ENCODE measurements at regions of chr2 and their contacts with region 1.

Region 1: DNA sequence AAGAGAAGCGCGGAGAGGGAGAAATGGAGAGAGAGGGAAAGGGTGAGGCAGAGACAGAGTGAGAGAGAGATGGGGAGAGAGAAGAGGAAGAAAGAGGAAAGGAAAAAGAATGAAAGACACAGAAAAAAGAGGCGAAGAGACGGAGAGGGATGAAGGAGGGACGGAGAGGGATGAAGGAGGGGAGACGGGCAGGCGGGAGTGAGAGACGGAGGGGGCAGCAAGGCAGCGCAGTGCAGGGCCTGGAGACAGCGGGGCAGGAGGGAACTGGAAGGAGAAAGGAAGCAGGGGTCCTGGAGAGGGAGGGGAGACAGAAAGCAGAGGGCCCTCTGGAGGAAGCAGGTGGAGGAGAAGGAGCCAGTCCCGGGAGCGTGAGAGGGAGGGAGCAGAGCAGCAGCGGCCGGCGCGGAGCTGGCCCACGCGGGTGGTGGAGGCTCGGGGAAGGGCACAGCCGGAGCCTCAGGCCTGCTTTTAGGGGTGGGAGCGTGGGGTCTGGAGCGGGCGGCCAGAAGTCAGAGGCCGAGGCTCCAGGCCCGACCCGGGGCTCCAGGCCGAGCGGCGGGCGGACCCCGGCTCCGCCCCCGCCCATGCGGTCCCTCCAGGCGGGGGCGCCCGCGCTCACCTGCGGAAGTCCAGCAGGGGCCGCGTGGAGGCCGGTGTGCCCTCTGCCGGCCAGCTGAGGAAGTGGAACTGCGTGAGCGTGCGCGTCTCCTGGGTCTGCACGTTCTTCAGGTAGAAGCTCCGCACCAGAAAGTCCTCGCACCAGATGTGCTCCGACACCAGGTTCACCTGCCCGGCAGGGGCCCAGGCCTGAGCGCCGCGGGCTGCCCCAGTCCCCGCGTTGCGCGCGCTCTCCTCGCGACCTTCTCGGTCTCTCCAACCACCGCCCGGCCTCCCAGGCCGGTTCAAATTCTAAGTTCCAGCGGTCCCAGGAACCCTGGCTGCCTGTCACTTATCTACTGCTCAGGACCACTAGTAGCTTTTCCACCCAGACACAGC is 14.5 kb downstream of the PTPRN start:
- DNase-seq: peak; percentile 93
- ATAC-seq: peak; percentile 90
- H3K4me3 Mint-ChIP-seq: peak overlapping the region; percentile 68
- H3K27ac Mint-ChIP-seq: peak overlapping the region; percentile 84
- H3K4me1 Mint-ChIP-seq: peaks cover 22% of the 10 kb centered on the region
- H3K27me3 Mint-ChIP-seq: no peaks in the 10 kb centered on the region

Region 2: DNA sequence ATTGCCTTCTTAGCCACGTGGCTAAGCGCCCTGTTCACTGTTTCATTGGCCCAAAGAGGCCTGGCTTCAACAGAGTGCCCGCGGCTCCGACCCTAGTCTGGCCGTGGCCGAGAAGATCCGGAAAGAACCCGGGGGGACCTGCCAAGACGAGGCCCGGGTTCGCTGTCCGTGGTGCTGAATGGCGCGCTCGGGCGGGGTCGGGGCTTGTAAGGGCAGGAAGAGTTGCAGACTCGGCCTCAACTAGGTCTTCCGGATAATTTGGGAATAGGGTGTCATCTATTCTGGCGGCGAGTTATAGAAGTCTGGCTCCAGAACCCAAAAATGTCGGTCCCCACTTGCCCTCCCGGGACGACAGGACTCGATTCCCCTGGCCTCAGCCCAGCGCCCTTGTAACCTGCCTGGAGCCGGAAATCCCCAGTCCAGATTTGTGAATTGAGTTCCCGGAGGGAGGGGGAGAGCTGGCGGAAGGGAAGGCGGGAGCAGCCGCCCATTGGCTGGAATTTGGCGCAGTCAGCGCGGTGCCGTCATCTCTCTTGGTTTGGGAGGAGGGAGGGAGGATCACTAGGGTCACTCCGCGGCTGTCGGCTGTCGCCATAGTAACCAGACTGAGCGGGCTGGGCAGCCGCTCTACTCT is 331.7 kb before region 1 on chr2:
- CTCF ChIA-PET with region 1: no interaction called
- POLR2A ChIA-PET with region 1: no interaction called
- intact Hi-C with region 1: no loop called
- DNase-seq: peak; percentile 81
- ATAC-seq: no peak
- H3K4me3 Mint-ChIP-seq: no peak overlapping the region
- H3K27ac Mint-ChIP-seq: no peak overlapping the region
- H3K4me1 Mint-ChIP-seq: peaks cover 11% of the 10 kb centered on the region
- H3K27me3 Mint-ChIP-seq: peaks cover 62% of the 10 kb centered on the region

Region 3: GRCh38 chr2:219057709-219058540 is 236.7 kb before region 1 on chr2:
- CTCF ChIA-PET with region 1: interaction called, 8 read pairs
- POLR2A ChIA-PET with region 1: no interaction called
- intact Hi-C with region 1: loop called (anchors 1 to 5 kb)
- DNase-seq: peak; percentile 90
- ATAC-seq: peak; percentile 97
- H3K4me3 Mint-ChIP-seq: no peak overlapping the region
- H3K27ac Mint-ChIP-seq: no peak overlapping the region
- H3K4me1 Mint-ChIP-seq: peaks cover 19% of the 10 kb centered on the region
- H3K27me3 Mint-ChIP-seq: peaks cover 56% of the 10 kb centered on the region

Region 4: DNA sequence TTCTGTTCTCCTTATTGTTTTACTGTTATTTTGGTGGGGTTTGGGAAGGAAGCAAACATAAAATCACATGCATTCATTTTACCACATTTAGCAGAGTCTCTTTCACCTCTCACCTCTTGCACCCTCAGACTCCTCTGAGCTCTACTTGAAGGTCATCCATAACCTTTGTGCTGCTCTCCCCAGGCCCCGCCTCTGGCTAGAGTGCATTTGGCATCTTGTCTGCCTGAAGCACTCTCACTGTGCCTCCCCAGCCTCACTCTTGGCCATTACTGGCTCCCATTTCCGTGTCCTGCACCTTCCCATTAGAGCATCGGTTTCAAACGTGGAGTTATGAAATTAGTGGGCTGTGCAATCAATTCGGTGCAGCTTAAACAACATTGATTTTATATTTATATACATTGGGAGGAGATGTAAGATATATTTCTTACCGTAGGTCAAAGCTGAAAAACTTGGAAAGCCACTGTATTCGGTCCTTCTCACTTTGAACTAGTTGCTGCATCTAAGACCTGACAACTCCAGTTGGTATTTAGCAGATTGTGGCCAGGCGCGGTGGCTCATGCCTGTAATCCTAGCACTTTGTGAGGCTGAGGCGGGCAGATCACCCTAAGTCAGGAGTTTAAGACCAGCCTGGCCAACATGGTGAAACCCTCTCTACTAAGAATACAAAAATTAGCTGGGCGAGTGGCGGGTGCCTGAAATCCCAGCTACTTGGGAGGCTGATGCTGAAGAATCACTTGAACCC is 95.0 kb before region 1 on chr2:
- CTCF ChIA-PET with region 1: interaction called, 12 read pairs
- POLR2A ChIA-PET with region 1: interaction called, 4 read pairs
- intact Hi-C with region 1: no loop called
- DNase-seq: no peak
- ATAC-seq: no peak
- H3K4me3 Mint-ChIP-seq: no peak overlapping the region
- H3K27ac Mint-ChIP-seq: no peak overlapping the region
- H3K4me1 Mint-ChIP-seq: peaks cover 8% of the 10 kb centered on the region
- H3K27me3 Mint-ChIP-seq: no peaks in the 10 kb centered on the region

Region 5: DNA sequence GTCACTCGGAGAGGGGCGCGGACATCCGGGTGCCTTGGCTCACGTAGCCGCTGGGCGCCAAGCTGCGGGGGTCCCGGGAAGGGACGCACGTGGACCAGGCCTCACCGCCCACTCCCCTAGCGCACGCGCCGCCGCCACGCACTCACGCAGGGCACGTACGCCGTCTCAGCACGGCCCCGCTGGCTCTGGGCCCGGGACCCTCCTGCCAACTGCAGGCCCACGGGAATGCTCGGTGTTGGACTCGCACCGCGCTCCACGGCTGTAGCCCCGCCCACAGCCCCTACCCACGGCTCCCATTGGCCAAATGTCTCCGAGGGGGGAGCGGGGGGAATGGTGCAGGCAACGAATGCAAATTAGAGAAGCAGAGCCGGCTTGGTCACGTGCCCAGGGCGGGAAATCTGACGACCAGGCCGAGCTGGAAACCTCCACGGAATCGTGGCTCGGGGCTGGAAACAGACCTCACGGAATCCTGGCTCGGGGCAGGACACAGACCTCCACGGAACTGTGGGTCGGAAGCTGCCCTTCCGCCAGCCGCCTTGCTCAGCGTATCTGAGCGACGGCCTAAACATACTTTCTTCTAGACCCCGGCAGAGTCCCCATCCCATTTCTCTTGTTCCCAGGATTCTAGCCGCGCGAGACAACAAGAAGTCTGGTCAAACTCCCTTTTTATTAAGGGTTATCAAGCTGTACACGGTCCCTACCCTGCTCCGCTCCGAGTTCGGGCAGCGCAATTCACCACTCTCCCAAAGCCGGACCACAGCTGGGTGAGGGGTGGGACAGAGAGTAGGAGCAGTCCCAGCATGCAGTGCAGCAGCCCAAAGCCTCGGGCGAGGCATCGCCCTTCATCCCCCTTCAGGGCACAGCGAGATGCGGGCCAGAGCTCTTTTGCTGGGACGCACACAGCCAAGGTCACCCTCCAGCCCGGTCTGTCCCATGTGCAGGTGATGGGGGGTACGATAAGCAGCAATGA is 75.6 kb before region 1 on chr2 and contains the start of gene ABCB6:
- CTCF ChIA-PET with region 1: interaction called, 15 read pairs
- POLR2A ChIA-PET with region 1: no interaction called
- intact Hi-C with region 1: loop called in 1 of 2 experiments (anchors 2 kb)
- DNase-seq: peak; percentile 94
- ATAC-seq: peak; percentile 89
- H3K4me3 Mint-ChIP-seq: peak within 1 kb of the TSS; percentile 83
- H3K27ac Mint-ChIP-seq: peak within 1 kb of the TSS; percentile 74
- H3K4me1 Mint-ChIP-seq: peaks cover 24% of the 10 kb centered on the region
- H3K27me3 Mint-ChIP-seq: no peaks in the 10 kb centered on the region
- total RNA-seq, gene ABCB6: 18.2 to 21.9 TPM

Region 6: DNA sequence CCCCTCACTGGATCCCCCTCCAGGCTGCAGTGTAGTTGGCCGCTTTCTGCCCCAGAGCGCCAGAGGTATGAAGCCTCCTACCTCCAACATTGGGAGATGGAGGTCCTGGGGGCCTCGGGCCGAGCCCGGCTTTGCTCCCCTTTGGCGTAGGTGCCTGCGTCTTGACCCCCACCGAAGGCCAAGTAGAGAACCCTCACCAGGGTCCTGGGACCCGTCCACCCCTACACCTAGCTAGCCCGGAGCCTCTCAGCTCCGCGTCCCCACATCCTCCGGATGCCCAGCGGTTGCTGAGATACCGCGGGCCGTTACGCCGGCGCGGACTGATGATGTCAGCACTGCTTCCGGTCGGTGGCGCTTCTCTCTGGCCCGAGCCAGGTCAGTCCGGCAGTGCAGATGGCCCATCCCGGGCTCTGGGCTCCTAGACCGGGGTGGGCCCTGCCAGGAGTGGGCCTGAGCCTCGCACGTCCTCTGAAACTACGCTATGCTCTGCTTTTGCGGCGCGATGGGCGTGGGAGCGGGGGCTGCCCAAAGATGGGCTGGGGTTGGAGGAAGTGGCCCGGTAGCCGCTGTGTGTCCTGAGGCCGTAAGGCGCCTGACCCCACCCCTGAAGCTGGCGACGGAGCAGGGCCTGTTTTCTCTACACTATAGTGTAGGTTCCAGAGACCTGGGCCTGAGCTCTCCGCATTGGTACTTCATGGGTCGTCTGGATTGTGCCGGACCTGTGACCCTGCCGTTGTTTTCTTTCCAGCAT is 49.3 kb before region 1 on chr2 and contains the starts of genes GLB1L and STK16:
- CTCF ChIA-PET with region 1: interaction called, 30 read pairs
- POLR2A ChIA-PET with region 1: interaction called, 3 read pairs
- intact Hi-C with region 1: no loop called
- DNase-seq: peak; percentile 93
- ATAC-seq: peak; percentile 62
- H3K4me3 Mint-ChIP-seq: peak within 1 kb of the TSS; percentile 89
- H3K27ac Mint-ChIP-seq: peak within 1 kb of the TSS; percentile 100
- H3K4me1 Mint-ChIP-seq: peaks cover 59% of the 10 kb centered on the region
- H3K27me3 Mint-ChIP-seq: no peaks in the 10 kb centered on the region
- total RNA-seq, gene GLB1L: 2.7 to 4.2 TPM
- total RNA-seq, gene STK16: 34.3 to 35.4 TPM

Region 7: GRCh38 chr2:219261024-219261855 is 33.4 kb before region 1 on chr2:
- CTCF ChIA-PET with region 1: interaction called, 61 read pairs
- POLR2A ChIA-PET with region 1: no interaction called
- intact Hi-C with region 1: no loop called
- DNase-seq: no peak
- ATAC-seq: no peak
- H3K4me3 Mint-ChIP-seq: no peak overlapping the region
- H3K27ac Mint-ChIP-seq: no peak overlapping the region
- H3K4me1 Mint-ChIP-seq: peaks cover 2% of the 10 kb centered on the region
- H3K27me3 Mint-ChIP-seq: peaks cover 2% of the 10 kb centered on the region

Region 8: DNA sequence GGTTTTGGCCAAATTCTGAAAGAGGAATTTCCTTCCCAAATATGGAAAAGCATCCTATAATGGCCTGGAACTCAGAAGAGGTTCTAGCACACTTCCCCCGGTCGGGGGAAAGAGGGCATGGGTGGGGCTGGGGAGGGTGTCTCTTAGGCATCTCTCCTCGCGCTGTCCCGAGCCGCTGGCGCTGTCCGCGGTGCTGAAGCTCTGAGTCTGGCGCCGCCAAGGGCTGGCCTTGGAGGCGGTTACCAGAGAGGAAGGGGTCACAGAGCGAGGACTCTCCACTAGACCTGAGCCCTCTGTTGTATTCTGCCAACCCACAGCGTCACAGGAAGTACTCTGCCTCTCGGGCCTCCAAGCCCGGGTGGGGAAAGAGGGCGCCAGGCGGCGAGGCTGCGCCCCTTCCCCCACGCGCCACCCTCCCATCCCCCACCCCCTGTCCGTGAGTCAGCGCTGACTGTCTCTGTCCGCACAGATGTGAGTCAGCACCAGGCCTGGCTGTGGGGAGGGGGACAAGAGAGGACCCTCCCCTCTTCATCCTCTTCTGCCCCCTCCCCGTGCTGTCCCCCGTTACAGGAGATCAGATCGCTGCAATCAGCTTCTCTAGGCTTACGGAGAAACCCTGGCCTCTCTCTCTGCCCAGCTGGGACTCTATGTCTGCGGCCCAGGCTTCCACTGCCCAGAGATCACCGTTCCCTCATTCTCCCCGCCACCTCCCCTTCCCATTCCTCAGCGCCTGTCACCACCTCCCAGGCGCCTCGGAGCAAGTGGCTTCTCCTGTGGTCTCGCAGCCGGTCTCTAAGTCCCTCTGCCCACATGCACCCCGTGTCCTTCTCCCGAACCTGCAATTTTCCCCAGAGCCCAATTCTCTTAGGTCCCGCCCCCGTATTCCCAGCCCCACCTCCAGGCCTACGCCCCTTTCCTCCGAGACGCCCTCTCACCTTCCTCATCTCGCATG is 13.8 kb after region 1 on chr2:
- CTCF ChIA-PET with region 1: interaction called, 14 read pairs
- POLR2A ChIA-PET with region 1: no interaction called
- intact Hi-C with region 1: no loop called
- DNase-seq: peak; percentile 87
- ATAC-seq: peak; percentile 92
- H3K4me3 Mint-ChIP-seq: no peak overlapping the region
- H3K27ac Mint-ChIP-seq: no peak overlapping the region
- H3K4me1 Mint-ChIP-seq: peaks cover 7% of the 10 kb centered on the region
- H3K27me3 Mint-ChIP-seq: peaks cover 38% of the 10 kb centered on the region

Region 9: DNA sequence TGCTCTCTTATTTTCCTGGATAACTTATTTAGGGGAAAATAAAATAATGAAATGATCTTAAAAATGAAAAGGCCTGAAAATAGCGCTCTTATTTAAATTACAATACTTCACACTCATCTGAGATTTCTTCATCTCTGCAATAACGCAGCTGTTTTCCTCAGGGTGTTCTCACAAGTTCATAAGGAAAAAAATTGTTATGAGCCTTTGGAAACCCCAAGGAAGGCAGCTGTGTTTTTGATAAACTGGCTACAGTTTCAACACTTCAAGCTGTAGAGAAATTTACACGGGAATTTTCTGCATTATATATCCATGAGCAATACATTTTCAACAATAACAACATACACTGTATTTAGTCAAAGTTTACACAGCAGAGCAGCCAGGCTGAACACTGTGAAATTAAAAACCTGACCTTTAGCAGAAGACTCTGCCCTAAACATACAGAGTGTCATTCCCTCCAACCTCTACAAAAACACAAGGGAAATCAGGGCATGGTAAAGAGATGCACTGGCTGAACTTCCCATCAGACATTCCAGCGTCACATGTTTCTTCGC is 1292.4 kb after region 1 on chr2:
- CTCF ChIA-PET with region 1: no interaction called
- POLR2A ChIA-PET with region 1: no interaction called
- intact Hi-C with region 1: no loop called
- DNase-seq: no peak
- ATAC-seq: no peak
- H3K4me3 Mint-ChIP-seq: no peak overlapping the region
- H3K27ac Mint-ChIP-seq: no peak overlapping the region
- H3K4me1 Mint-ChIP-seq: no peaks in the 10 kb centered on the region
- H3K27me3 Mint-ChIP-seq: peaks cover 5% of the 10 kb centered on the region